ENCODE measurements at regions of chr2 and their contacts with region 1.

Region 1: GRCh38 chr2:218186355-218186766 is 19.6 kb upstream of the CXCR1 start:
- DNase-seq: peak; percentile 87

Region 2: GRCh38 chr2:218238887-218239286 is 52.5 kb after region 1 on chr2:
- intact Hi-C with region 1: no loop called
- DNase-seq: no peak

Region 3: GRCh38 chr2:218367415-218368153 is 181.2 kb after region 1 on chr2:
- intact Hi-C with region 1: loop called in 1 of 2 experiments (anchors 10 kb)
- DNase-seq: peak; percentile 98